ENCODE measurements at regions of chrX and their contacts with region 1.

Region 1: DNA sequence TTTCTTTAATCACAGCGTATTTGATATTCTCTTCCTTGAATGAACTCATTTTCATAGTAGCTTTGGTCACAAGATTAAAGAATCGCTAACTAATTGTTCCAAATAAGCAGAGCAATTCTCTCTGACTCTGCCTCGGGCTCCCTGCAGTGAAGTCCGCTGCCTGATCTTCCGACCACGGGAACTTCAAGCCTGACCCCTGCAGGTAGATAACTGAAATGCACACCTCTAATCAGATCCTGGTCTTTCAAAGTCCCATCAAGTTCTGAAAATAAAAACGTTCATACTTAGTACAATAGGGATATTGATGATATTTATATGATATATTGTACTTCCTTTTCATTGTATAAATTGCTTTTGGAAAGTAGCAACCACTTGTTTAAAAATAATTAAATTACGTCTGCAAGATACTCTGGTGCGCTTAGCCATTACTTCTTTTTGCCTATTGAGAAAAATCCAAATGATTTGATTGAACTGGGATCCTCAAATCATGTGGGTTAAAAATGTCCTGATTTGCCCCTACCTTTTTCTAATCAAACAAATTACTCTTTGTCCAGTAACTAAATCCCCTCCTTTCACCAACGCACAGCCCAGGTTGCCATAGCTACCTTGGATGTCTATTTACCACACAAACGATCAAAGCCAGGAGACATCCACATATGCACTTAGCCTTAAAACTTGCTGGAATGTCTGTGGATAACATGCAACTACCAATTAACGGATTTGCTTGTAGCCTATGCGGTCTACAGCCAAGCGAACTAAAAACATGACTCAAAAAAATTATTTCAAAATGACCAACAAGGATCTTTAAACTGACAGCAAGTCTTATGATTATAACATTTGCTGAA is 4.2 kb downstream of the MID1 start:
- DNase-seq: no peak
- ATAC-seq: peak; percentile 58

Region 2: GRCh38 chrX:10482261-10482660 is 133.9 kb before region 1 on chrX:
- intact Hi-C with region 1: loop called (anchors 10 kb)
- DNase-seq: peak; percentile 66
- ATAC-seq: peak; percentile 32

Region 3: GRCh38 chrX:10579112-10580011 is 36.8 kb before region 1 on chrX:
- intact Hi-C with region 1: no loop called
- DNase-seq: no peak
- ATAC-seq: no peak

Measured in Right ventricle myocardium inferior (tissue), 1 donor.